Endothelial cell of umbilical vein (primary cell): ENCODE measurements at regions of chr11 and their contacts with region 1.

Region 1: GRCh38 chr11:2885676-2886081 is at the start of gene CDKN1C:
- DNase-seq: peak; percentile 88
- H3K4me3 ChIP-seq: peak within 1 kb of the TSS in 2 of 3 experiments; percentile 12 to 44
- H3K27ac ChIP-seq: no peak within 1 kb of the TSS
- H3K4me1 ChIP-seq: peaks cover 8% of the 10 kb centered on the region
- H3K27me3 ChIP-seq: peaks cover 3 to 14% of the 10 kb centered on the region in 2 experiments
- CTCF ChIP-seq: no peak
- POLR2A ChIP-seq: no peak
- total RNA-seq, gene CDKN1C: 5.2 and 9.0 TPM in 2 replicates

Region 2: DNA sequence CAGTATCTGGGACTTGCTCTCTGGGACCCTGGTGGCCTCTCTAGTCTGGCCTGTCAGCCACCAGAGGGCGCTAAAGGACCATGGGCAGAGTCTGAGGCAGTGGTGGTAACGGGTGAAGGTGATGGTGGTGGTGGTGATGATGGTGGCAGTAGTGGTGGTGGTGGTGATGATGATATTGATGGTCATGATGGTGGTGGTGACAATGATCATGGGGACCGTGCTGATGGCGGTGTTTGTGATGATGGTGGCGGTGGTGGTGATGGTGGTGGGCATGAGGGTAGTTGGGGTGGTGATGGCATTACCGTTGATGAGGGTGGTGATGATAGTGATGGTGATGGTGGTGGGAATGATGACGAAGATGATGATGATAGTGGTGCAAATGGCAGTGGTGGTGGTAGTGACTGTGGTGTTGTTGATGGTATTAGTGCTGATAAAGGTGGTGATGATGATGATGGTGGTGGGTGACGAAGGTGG is 457.3 kb before region 1 on chr11:
- CTCF ChIA-PET with region 1: interaction called, 6 read pairs
- POLR2A ChIA-PET with region 1: no interaction called
- dilution Hi-C with region 1: no loop called
- intact Hi-C with region 1: loop called (anchors 2 kb)
- DNase-seq: peak; percentile 32
- H3K4me3 ChIP-seq: no peak overlapping the region
- H3K27ac ChIP-seq: no peak overlapping the region
- H3K4me1 ChIP-seq: no peaks in the 10 kb centered on the region
- H3K27me3 ChIP-seq: no peaks in the 10 kb centered on the region
- CTCF ChIP-seq: peak; percentile 76 to 84
- POLR2A ChIP-seq: no peak

Region 3: GRCh38 chr11:2691991-2692875 is 193.4 kb before region 1 on chr11:
- CTCF ChIA-PET with region 1: no interaction called
- POLR2A ChIA-PET with region 1: no interaction called
- dilution Hi-C with region 1: no loop called
- intact Hi-C with region 1: loop called (anchors 5 kb)
- DNase-seq: no peak
- H3K4me3 ChIP-seq: no peak overlapping the region
- H3K27ac ChIP-seq: no peak overlapping the region
- H3K4me1 ChIP-seq: no peaks in the 10 kb centered on the region
- H3K27me3 ChIP-seq: no peaks in the 10 kb centered on the region
- CTCF ChIP-seq: peak in 1 of 2 donors; percentile 19
- POLR2A ChIP-seq: no peak

Region 4: GRCh38 chr11:2699531-2700414 is 185.9 kb before region 1 on chr11 and contains the start of gene KCNQ1OT1:
- CTCF ChIA-PET with region 1: no interaction called
- POLR2A ChIA-PET with region 1: interaction called, 4 read pairs
- dilution Hi-C with region 1: no loop called
- intact Hi-C with region 1: loop called (anchors 1 kb)
- DNase-seq: peak; percentile 98
- H3K4me3 ChIP-seq: peak within 1 kb of the TSS; percentile 44 to 69 (median 53)
- H3K27ac ChIP-seq: peak within 1 kb of the TSS; percentile 60
- H3K4me1 ChIP-seq: peaks cover 5% of the 10 kb centered on the region
- H3K27me3 ChIP-seq: no peaks in the 10 kb centered on the region
- CTCF ChIP-seq: no peak
- POLR2A ChIP-seq: peak; percentile 99
- total RNA-seq, gene KCNQ1OT1: 1.5 and 1.8 TPM in 2 replicates

Region 5: GRCh38 chr11:2778630-2779498 is 106.8 kb before region 1 on chr11:
- CTCF ChIA-PET with region 1: no interaction called
- POLR2A ChIA-PET with region 1: no interaction called
- dilution Hi-C with region 1: no loop called
- intact Hi-C with region 1: loop called (anchors 10 kb)
- DNase-seq: peak; percentile 41
- H3K4me3 ChIP-seq: no peak overlapping the region
- H3K27ac ChIP-seq: no peak overlapping the region
- H3K4me1 ChIP-seq: no peaks in the 10 kb centered on the region
- H3K27me3 ChIP-seq: no peaks in the 10 kb centered on the region
- CTCF ChIP-seq: no peak
- POLR2A ChIP-seq: no peak